ENCODE measurements at regions of chr18 and their contacts with region 1.

Region 1: GRCh38 chr18:45690975-45691815 is 32.8 kb upstream of the SLC14A1 start:
- DNase-seq: peak; percentile 71
- H3K4me3 ChIP-seq: no peak overlapping the region
- H3K27ac ChIP-seq: no peak overlapping the region
- H3K4me1 ChIP-seq: no peaks in the 10 kb centered on the region
- H3K27me3 ChIP-seq: peaks cover 4% of the 10 kb centered on the region in 2 experiments
- CTCF ChIP-seq: peak; percentile 71 to 85
- POLR2A ChIP-seq: no peak

Region 2: GRCh38 chr18:45664824-45665763 is 26.1 kb before region 1 on chr18:
- CTCF ChIA-PET with region 1: interaction called, 18 read pairs
- POLR2A ChIA-PET with region 1: no interaction called
- dilution Hi-C with region 1: no loop called
- intact Hi-C with region 1: loop called (anchors 1 kb)
- DNase-seq: peak; percentile 65
- H3K4me3 ChIP-seq: no peak overlapping the region
- H3K27ac ChIP-seq: no peak overlapping the region
- H3K4me1 ChIP-seq: peaks cover 5% of the 10 kb centered on the region
- H3K27me3 ChIP-seq: no peaks in the 10 kb centered on the region
- CTCF ChIP-seq: peak; percentile 75 to 78
- POLR2A ChIP-seq: no peak

Region 3: DNA sequence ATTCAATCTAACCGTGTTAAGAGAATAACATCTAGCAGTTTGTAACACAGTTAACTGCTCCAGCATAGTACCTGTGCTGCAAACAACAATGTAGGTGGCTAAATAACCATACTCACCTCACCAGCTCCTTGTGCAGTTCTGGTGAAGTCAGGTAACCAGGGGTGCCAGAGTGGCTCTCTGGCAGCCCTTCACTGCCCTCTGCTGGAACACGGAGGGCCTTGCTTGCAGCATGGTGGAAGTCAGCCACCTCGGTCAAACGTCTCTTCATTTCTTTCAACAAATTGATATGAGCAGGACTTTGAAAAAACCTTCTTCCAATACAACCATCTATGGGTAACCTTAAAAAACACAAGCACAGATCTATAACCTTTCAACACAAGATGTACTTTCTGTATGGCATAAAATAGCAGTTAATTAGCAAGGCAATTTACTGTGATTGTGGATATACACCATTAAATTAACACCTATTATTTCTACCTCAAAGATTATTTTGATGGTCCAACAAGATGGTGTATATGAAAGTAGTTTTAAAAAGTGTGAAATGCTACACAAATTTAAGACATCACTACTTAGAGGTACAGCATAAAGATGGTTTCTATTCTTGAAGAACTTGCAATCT is 219.3 kb after region 1 on chr18:
- CTCF ChIA-PET with region 1: interaction called, 10 read pairs
- POLR2A ChIA-PET with region 1: no interaction called
- dilution Hi-C with region 1: no loop called
- intact Hi-C with region 1: loop called (anchors 1 kb)
- DNase-seq: peak; percentile 61
- H3K4me3 ChIP-seq: no peak overlapping the region
- H3K27ac ChIP-seq: no peak overlapping the region
- H3K4me1 ChIP-seq: no peaks in the 10 kb centered on the region
- H3K27me3 ChIP-seq: no peaks in the 10 kb centered on the region
- CTCF ChIP-seq: peak; percentile 77 to 87
- POLR2A ChIP-seq: no peak

Measured in endothelial cell of umbilical vein (primary cell).